Heart right ventricle (tissue), 16 donors: ENCODE measurements at regions of chr18 and their contacts with region 1.

Region 1: DNA sequence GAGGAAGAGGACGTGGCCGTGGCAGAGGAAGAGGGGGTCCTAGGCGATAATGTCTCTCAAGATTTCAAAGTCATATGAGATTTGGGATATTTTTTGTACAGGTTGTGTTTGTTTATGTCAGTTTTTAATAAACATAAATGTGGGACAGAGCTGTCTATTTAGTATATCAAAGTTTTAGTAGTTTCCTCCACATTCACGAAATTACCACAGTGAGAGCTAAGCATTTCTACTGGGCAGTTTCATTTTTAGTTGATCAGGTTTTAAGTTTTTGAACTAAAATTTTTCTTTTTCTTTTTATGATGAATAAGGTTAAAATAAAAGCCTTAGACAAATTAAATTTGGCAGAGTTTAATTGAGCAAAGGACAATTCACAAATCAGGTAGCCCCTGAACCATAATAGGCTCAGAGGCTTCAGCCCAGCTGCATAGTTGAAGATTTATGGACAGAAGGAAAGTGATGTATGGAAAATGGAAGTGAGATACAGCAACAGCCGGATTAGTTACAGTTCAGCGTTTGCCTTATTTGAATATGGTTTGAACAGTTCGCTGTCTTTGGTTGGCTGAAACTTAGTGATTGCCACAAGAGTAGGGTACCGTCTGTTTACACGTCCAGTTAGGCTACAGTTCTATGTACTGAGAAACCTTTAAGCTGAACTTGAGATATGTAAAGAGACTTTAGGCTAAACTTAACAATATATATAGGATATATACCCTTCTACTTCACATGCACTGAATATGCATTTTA is 17.1 kb downstream of the SNRPD1 start:
- DNase-seq: no peak
- ATAC-seq: no peak
- H3K4me3 ChIP-seq: no peak overlapping the region
- H3K27ac ChIP-seq: no peak overlapping the region
- H3K4me1 ChIP-seq: no peaks in the 10 kb centered on the region
- H3K27me3 ChIP-seq: no peaks in the 10 kb centered on the region
- CTCF ChIP-seq: no peak

Region 2: GRCh38 chr18:21693322-21693721 is 64.1 kb after region 1 on chr18:
- intact Hi-C with region 1: no loop called
- DNase-seq: no peak
- ATAC-seq: no peak
- H3K4me3 ChIP-seq: no peak overlapping the region
- H3K27ac ChIP-seq: no peak overlapping the region
- H3K4me1 ChIP-seq: no peaks in the 10 kb centered on the region
- H3K27me3 ChIP-seq: no peaks in the 10 kb centered on the region
- CTCF ChIP-seq: no peak

Region 3: DNA sequence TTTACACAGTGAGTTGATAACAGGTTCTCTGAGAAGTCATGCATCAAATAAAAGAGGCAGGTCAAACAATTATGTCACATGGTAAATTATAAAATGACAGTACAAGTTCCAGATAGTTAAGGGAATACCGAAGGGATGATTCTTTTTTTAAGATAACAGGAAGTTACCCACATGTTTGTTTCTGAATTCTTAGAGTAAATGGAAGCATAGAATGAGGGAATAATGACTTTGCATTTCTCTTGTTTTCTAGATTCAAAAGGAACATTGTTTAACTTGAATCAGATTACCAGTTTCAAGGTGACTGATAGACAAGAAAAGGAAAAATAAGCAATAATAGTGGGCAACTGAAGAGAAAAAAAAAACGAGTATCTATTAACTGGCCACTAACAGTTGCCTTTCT is 235.8 kb after region 1 on chr18:
- intact Hi-C with region 1: loop called in 1 of 10 experiments (anchors 10 kb)
- DNase-seq: no peak
- ATAC-seq: no peak
- H3K4me3 ChIP-seq: no peak overlapping the region
- H3K27ac ChIP-seq: no peak overlapping the region
- H3K4me1 ChIP-seq: no peaks in the 10 kb centered on the region
- H3K27me3 ChIP-seq: no peaks in the 10 kb centered on the region
- CTCF ChIP-seq: no peak